ENCODE measurements at regions of chr4 and their contacts with region 1.

Region 1: DNA sequence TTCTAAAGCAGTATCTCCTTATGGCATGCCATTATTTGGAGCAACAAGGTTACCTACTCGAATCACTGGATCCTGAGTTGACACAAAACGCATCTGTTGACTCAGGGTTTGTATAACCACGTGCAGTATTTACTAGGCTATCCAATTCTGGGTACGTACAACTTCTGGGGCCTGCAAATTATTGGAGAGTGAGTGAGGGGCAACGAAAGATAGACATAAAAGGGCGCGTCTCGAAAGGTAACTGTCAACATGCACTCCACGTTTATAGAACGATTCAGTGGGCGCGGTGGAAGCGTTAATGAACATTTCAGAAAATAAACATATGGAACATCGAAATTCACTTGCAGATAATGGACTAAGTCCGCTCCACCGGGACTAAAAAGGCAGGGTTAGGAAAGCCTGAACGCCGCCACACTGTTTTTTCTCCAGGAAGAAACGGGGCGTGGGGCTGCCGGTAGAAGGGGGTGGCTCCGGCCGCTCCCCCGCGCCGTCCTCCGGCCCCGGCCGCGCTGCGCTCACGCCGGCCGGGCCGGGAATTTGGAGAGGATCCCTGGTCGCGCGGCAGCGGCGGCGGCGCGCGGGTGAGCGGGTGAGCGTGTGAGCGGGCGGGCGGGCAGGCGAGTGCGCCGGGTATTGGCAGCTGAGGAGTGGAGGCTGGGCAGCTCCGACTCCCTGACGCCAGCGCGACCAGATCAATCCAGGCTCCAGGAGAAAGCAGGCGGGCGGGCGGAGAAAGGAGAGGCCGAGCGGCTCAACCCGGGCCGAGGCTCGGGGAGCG is at the start of gene SMAD1:
- DNase-seq: peak; percentile 82 to 85
- ATAC-seq: peak; percentile 88
- total RNA-seq, gene SMAD1: 36.3 to 44.4 TPM

Region 2: GRCh38 chr4:145248971-145249370 is 232.4 kb before region 1 on chr4:
- intact Hi-C with region 1: no loop called
- DNase-seq: no peak
- ATAC-seq: no peak

Region 3: DNA sequence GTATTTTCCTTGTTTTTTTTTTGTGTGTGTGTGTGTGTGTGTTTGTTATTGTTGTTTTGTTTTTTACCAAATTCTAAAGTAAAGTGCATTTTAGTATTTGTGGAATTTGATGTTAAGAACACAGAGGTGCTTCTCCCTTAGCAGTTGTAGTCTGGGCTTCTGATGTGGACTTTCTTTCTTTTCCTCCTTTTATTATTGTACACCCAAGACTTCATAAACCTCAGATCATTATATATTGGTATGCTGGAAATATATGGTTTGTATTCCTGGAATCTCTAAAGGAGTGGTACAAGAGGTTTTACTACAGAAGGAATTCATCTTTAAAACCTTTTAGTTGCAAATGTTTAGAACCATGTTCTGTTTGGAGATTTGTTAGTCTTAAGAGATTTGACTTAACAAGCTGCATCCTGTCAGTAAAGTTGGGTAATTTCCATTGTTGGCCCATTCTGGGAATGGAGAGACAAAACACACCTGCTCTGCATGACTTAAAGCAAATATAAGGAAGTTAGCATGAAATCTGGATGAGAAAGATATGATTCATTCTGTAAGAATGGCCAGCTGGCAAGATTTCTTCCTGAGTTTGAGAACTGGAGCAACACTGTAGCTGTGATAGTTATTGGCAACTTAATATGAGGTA is 64.3 kb after region 1 on chr4:
- intact Hi-C with region 1: loop called in 1 of 2 experiments (anchors 10 kb)
- DNase-seq: no peak
- ATAC-seq: peak; percentile 88

Region 4: GRCh38 chr4:145618932-145619638 is 137.7 kb after region 1 on chr4 and contains the start of gene MMAA:
- intact Hi-C with region 1: no loop called
- DNase-seq: peak; percentile 95 to 97
- ATAC-seq: peak; percentile 98
- total RNA-seq, gene MMAA: 15.0 to 18.3 TPM

Region 5: GRCh38 chr4:145656156-145656555 is 174.8 kb after region 1 on chr4:
- intact Hi-C with region 1: no loop called
- DNase-seq: no peak
- ATAC-seq: no peak